GM12878 (cell line): ENCODE measurements at regions of chr19 and their contacts with region 1.

Region 1: DNA sequence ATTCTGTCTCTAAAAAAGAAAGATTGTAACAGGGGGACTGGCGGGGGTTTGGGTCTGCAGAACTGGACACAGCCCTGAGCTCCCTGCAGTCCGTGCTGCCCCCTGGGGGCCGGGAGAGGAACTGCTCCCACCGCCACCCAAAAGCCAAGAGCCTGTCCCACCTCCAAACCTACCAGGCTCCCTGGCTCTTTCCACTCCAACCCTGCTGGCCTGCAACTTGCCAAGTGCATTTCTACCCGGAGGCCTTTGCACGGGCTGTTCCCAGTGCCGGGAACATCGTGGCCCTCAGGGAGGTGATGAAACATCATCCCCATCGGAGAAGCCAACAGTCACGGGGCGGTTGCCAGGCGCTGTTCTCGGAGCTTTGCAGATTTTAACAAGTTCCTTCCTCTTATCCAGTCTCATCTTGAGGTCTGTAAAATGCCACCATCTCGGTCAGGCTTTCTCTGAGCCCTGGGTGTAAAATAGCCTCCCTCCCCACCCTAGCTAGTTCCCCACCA is 50.7 kb downstream of the SMIM24 start:
- DNase-seq: no peak
- ATAC-seq: peak; percentile 92
- H3K4me3 ChIP-seq: no peak overlapping the region
- H3K27ac ChIP-seq: no peak overlapping the region
- H3K4me1 ChIP-seq: peaks cover 12% of the 10 kb centered on the region
- H3K27me3 ChIP-seq: no peaks in the 10 kb centered on the region
- CTCF ChIP-seq: peak; percentile 89 to 99 (median 89)
- EP300 ChIP-seq: no peak
- POLR2A ChIP-seq: no peak
- RAD21 ChIP-seq: peak; percentile 71

Region 2: GRCh38 chr19:3289971-3290569 is 139.6 kb before region 1 on chr19:
- CTCF ChIA-PET with region 1: no interaction called
- POLR2A ChIA-PET with region 1: no interaction called
- RAD21 ChIA-PET with region 1: no interaction called
- SMC1A ChIA-PET with region 1: no interaction called
- in situ Hi-C with region 1: no loop called
- intact Hi-C with region 1: no loop called
- DNase-seq: no peak
- ATAC-seq: no peak
- H3K4me3 ChIP-seq: no peak overlapping the region
- H3K27ac ChIP-seq: no peak overlapping the region
- H3K4me1 ChIP-seq: peaks cover 1% of the 10 kb centered on the region; the same call in 1 of the 2 replicates
- H3K27me3 ChIP-seq: peaks cover 5 to 6% of the 10 kb centered on the region in 2 experiments; a peak in 3 of 4 replicates
- CTCF ChIP-seq: no peak
- EP300 ChIP-seq: no peak
- POLR2A ChIP-seq: no peak
- RAD21 ChIP-seq: no peak

Region 3: DNA sequence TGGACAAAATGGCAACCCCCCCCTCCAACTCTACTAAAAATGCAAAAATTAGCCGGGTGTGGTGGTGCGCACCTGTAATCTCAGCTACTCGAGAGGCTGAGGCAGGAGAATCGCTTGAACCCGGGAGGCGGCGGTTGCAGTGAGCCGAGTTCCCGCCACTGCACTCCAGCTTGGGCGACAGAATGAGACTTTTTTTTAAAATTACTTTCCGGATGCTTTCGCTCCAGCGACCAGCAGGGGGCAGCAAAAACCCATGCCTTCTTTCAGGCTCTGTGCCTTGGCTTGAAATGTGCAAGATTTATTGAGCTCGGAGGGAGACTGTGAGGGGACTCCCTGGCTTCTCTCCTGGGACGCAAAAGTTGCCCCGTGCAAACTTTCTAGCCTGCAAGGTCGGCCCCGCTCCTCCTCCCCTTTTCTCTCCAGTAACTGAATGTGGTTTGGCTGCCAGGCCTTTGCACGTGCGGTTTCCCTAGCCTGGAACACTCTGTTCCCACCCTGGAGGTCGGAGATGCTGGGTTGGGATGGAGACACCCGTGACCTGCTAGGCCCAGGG is 124.7 kb before region 1 on chr19:
- CTCF ChIA-PET with region 1: interaction called, 12 read pairs
- POLR2A ChIA-PET with region 1: no interaction called
- RAD21 ChIA-PET with region 1: interaction called, 7 read pairs
- SMC1A ChIA-PET with region 1: interaction called, 3 read pairs
- in situ Hi-C with region 1: no loop called
- intact Hi-C with region 1: no loop called
- DNase-seq: peak; percentile 27
- ATAC-seq: peak; percentile 77
- H3K4me3 ChIP-seq: no peak overlapping the region
- H3K27ac ChIP-seq: no peak overlapping the region
- H3K4me1 ChIP-seq: no peaks in the 10 kb centered on the region
- H3K27me3 ChIP-seq: no peaks in the 10 kb centered on the region
- CTCF ChIP-seq: peak; percentile 72 to 86 (median 75)
- EP300 ChIP-seq: no peak
- POLR2A ChIP-seq: no peak
- RAD21 ChIP-seq: peak; percentile 80

Region 4: DNA sequence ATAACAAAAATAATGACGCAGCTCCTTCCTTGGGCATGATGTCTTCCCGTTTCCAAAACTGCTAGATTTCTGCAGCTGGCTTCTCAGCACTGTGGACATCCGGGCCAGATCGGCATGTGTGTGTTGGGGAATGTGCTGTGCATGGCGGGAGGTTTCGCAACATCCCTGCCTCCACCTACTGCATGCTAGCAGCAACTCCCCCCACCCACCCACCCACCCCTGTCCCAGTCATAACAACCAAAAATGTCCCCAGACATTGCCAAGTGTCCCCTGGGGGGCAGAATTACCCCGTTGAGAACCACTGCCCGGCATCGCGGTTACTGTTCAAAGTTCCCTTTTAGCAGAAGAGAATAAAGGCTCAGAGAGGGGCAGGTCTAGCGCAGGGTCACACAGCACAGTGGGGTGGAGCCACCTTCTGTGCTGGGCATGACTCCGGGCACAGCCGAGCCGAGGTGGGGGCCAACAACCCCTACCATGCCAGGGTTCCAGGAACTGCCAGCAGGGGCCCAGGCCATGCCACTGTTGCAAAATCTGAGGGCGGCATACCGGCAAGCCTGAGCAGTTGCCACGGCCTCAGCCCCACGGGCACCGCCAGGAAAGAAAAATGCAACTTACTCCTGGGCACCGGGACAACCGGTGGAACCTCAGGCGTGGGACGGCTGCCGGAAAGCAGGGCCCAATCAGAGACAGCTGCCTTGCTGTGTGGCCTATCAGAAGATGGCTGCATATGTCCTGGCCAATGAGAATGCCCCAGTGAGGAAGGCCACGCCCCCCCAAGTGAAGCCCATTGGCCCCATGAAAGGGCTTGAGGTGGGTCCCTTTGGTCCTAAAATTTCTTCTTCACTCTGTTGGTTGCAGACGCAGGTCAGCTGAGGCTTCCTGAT is 85.8 kb before region 1 on chr19:
- CTCF ChIA-PET with region 1: interaction called, 24 read pairs
- POLR2A ChIA-PET with region 1: no interaction called
- RAD21 ChIA-PET with region 1: interaction called, 19 read pairs
- SMC1A ChIA-PET with region 1: interaction called, 14 read pairs
- in situ Hi-C with region 1: no loop called
- intact Hi-C with region 1: loop called (anchors 5 kb)
- DNase-seq: no peak
- ATAC-seq: peak; percentile 91
- H3K4me3 ChIP-seq: no peak overlapping the region
- H3K27ac ChIP-seq: no peak overlapping the region
- H3K4me1 ChIP-seq: no peaks in the 10 kb centered on the region
- H3K27me3 ChIP-seq: no peaks in the 10 kb centered on the region; a peak in 1 of 4 replicates
- CTCF ChIP-seq: peak; percentile 12 to 35 (median 25); a peak in 4 of 6 replicates
- EP300 ChIP-seq: no peak
- POLR2A ChIP-seq: no peak
- RAD21 ChIP-seq: peak; percentile 55

Region 5: DNA sequence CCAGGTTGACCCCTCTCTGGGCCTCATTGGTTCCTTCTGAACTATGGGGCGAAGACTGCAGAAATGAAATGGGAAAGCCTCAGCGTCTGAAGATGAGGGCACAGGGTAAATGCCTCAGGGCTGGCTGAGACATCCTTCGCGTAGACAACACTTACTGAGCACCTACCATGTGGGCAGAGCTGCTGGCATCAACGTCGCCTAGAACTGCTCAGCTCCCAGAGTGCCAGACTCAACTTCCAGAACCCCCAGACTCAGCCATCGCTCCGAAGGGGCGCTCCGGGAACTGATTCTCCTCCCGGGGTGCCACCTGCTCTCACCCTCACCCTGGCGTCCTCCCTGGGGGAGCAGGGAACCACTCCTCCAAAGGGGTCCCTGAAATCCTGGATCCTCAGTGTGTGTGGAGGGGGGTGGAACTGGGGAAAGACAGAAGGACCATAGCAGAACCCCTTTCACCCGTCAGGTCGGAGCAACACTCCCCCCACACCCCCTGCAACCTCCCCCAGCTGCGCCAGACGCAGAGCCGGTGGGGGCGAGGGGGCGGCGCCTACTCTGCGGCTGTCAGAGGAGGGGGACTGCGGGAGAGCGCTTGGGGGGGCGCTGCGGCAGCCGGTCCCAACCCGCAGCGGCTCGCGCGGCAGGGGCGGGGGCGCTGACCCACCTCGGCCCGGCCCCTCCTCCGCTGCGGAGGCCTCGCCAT is 71.5 kb before region 1 on chr19:
- CTCF ChIA-PET with region 1: interaction called, 14 read pairs
- POLR2A ChIA-PET with region 1: interaction called, 5 read pairs
- RAD21 ChIA-PET with region 1: interaction called, 3 read pairs
- SMC1A ChIA-PET with region 1: interaction called, 5 read pairs
- in situ Hi-C with region 1: no loop called
- intact Hi-C with region 1: no loop called
- DNase-seq: no peak
- ATAC-seq: no peak
- H3K4me3 ChIP-seq: peak overlapping the region; percentile 69; the same call in 1 of the 2 replicates
- H3K27ac ChIP-seq: peak overlapping the region; percentile 6; the same call in 1 of the 2 replicates
- H3K4me1 ChIP-seq: peaks cover 19% of the 10 kb centered on the region
- H3K27me3 ChIP-seq: no peaks in the 10 kb centered on the region
- CTCF ChIP-seq: no peak
- EP300 ChIP-seq: no peak
- POLR2A ChIP-seq: no peak
- RAD21 ChIP-seq: no peak

Region 6: GRCh38 chr19:3365836-3366752 is 63.5 kb before region 1 on chr19 and contains the start of gene NFIC:
- CTCF ChIA-PET with region 1: interaction called, 8 read pairs
- POLR2A ChIA-PET with region 1: no interaction called
- RAD21 ChIA-PET with region 1: interaction called, 3 read pairs
- SMC1A ChIA-PET with region 1: interaction called, 5 read pairs
- in situ Hi-C with region 1: no loop called
- intact Hi-C with region 1: loop called (anchors 5 kb)
- DNase-seq: no peak
- ATAC-seq: peak; percentile 30
- H3K4me3 ChIP-seq: peak within 1 kb of the TSS; percentile 96
- H3K27ac ChIP-seq: peak within 1 kb of the TSS; percentile 92
- H3K4me1 ChIP-seq: peaks cover 36% of the 10 kb centered on the region
- H3K27me3 ChIP-seq: no peaks in the 10 kb centered on the region
- CTCF ChIP-seq: no peak
- EP300 ChIP-seq: no peak
- POLR2A ChIP-seq: peak; percentile 3; the same call in 1 of the 2 replicates
- RAD21 ChIP-seq: no peak
- polyA plus RNA-seq, gene NFIC: 0.71 to 1.1 TPM

Region 7: GRCh38 chr19:3448616-3449334 is 19.1 kb after region 1 on chr19:
- CTCF ChIA-PET with region 1: no interaction called
- POLR2A ChIA-PET with region 1: no interaction called
- RAD21 ChIA-PET with region 1: no interaction called
- SMC1A ChIA-PET with region 1: no interaction called
- in situ Hi-C with region 1: no loop called
- intact Hi-C with region 1: no loop called
- DNase-seq: no peak
- ATAC-seq: no peak
- H3K4me3 ChIP-seq: no peak overlapping the region
- H3K27ac ChIP-seq: no peak overlapping the region
- H3K4me1 ChIP-seq: no peaks in the 10 kb centered on the region
- H3K27me3 ChIP-seq: no peaks in the 10 kb centered on the region
- CTCF ChIP-seq: no peak
- EP300 ChIP-seq: no peak
- POLR2A ChIP-seq: no peak
- RAD21 ChIP-seq: no peak

Region 8: GRCh38 chr19:3984908-3985642 is 555.4 kb after region 1 on chr19 and contains the start of gene EEF2:
- CTCF ChIA-PET with region 1: no interaction called
- POLR2A ChIA-PET with region 1: no interaction called
- RAD21 ChIA-PET with region 1: no interaction called
- SMC1A ChIA-PET with region 1: no interaction called
- in situ Hi-C with region 1: no loop called
- intact Hi-C with region 1: no loop called
- DNase-seq: peak; percentile 48
- ATAC-seq: peak; percentile 32
- H3K4me3 ChIP-seq: peak within 1 kb of the TSS; percentile 97
- H3K27ac ChIP-seq: peak within 1 kb of the TSS; percentile 79
- H3K4me1 ChIP-seq: peaks cover 25% of the 10 kb centered on the region
- H3K27me3 ChIP-seq: no peaks in the 10 kb centered on the region
- CTCF ChIP-seq: no peak
- EP300 ChIP-seq: 0 out of 4 replicates have a peak, but pooled peaks of 1 of the 2 experiments have one; percentile 22
- POLR2A ChIP-seq: peak; percentile 100
- RAD21 ChIP-seq: no peak
- polyA plus RNA-seq, gene EEF2: 513 to 937 TPM